Kidney (tissue), 22 donors: ENCODE measurements at regions of chr2 and their contacts with region 1.

Region 1: DNA sequence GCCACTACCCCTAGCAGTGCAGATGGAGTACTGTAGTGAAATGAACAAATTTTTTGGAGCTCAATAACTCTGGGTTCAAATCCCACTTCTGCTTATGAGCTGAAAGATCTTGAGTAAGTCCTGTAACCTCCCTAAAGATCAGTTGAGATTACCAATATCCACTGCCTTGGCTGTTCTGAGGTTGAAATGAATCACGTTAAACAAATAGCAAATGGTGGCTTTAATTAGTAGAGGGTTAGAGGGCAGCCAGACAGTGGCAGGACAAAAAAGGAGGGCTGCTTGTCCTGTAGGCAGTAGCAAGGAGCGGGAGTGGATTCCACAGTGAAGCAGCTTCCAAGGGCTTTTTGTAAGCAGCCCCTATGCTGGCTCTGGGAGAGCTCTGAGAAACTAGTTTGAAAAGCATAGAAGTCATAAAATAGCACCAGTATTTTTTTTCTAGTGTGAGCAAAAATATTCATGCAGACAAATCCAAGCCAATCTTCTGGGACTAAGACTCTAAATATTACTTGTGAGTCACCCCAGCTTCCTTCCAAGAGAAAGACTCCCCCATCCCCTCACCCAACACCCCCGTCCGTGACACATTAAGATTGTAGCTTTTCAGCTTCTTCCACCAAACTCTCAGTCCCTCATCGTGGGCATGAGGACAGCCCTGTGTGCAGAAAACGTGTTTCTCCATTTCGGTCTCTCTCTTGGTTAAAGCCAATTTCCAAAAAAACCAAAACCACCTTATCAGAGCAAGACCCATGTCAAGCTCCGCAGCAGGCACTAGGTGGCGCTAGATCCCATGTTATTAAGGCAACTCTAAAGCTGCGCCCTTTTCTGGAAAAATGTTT is 123.5 kb upstream of the LGALSL start:
- DNase-seq: peak; percentile 86 to 95 (median 89)
- H3K4me3 ChIP-seq: peak overlapping the region in 2 of 3 donors; percentile 32 to 45
- H3K27ac ChIP-seq: peak overlapping the region; percentile 61 to 75
- H3K4me1 ChIP-seq: peaks cover 2 to 17% (median 4%) of the 10 kb centered on the region in 3 donors
- H3K27me3 ChIP-seq: no peaks in the 10 kb centered on the region
- CTCF ChIP-seq: peak; percentile 94

Region 2: DNA sequence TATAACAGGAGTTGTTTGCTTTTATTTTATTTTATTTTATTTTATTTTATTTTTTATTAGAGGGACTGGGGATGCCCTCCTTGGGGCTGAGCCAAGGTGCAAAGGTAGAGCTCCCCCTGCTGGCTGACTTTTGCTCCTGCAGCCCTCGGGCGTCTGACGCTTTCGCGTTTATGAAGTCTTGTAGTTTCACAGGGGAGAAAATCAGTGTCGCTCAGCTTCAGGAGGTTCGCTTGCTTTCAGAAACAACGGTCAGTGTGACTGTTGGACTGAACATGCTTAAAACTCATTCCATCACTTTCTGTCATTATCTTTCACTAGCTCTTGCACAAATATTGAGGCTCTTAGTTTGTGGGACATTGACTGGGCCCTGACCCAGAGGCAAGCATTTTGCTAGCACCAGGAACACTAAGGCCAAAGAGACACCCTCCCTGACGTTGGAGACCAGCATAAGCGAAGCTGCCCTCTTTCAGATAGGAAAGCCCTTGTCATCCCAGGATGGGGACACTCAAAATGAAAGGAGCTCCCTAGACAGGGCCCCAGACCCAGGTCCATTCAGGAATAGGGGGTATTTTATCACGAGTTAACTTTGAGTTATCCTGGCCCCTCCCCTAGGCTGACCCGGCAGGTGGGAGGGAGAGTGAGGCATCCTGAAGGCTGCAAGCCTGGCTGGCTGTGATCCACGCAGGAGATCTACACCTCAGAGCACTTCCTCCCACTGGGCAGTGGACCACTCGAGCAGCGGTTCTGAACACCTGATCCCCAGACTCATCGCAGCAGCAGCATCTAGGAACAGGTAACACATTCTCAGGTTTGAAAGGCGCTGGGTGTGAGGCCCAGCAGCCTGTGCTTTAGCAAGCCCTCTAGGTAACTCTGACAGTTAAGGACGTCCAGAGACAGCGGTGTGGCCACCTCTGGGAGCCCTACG is 157.8 kb after region 1 on chr2:
- intact Hi-C with region 1: loop called (anchors 5 kb)
- DNase-seq: peak in 4 of 5 donors; percentile 78 to 83 (median 80)
- H3K4me3 ChIP-seq: no peak overlapping the region
- H3K27ac ChIP-seq: no peak overlapping the region
- H3K4me1 ChIP-seq: no peaks in the 10 kb centered on the region
- H3K27me3 ChIP-seq: no peaks in the 10 kb centered on the region
- CTCF ChIP-seq: peak; percentile 96